GM13976 (cell line): ENCODE measurements at regions of chr2 and their contacts with region 1.

Region 1: DNA sequence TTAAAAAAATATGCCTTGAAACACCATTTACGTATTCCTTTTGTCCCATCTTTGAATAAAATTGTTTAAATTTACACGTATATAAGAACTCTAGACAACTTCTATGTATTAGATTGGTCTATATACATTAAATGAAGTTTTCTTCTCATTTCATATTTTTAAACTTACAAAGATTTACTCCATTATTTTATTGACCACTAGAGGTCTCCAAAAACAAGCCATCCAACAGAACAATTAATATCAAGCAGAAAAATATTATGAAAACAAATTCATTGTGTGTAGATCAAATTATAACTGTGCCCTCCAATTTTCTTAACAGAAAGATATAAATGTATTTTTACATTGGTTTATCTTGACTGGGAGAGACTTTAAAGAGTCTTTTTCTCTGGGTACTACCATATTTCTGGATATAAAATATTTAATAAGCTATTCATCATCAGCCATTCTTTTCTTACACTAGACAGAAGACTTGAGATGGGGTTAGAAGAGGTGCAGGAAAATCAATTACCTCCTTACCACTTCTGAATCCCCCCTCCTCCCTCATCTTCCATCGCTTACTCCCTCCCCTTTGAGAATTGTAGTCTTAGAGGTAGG is 66.5 kb downstream of the DPP4 start:
- DNase-seq: no peak
- CTCF ChIP-seq: peak; percentile 3

Region 2: GRCh38 chr2:161913865-161914264 is 93.7 kb before region 1 on chr2:
- in situ Hi-C with region 1: no loop called
- DNase-seq: no peak
- CTCF ChIP-seq: no peak

Region 3: GRCh38 chr2:162123806-162124758 is 116.5 kb after region 1 on chr2:
- in situ Hi-C with region 1: loop called (anchors 10 kb)
- DNase-seq: peak; percentile 62
- CTCF ChIP-seq: peak; percentile 47